ENCODE measurements at regions of chr4 and their contacts with region 1.

Region 1: GRCh38 chr4:74311696-74312313 is 3.5 kb downstream of the EPGN start:
- DNase-seq: peak; percentile 39 to 61
- H3K4me3 ChIP-seq: no peak overlapping the region
- H3K4me3 Mint-ChIP-seq: no peak overlapping the region
- H3K27ac Mint-ChIP-seq: no peak overlapping the region
- H3K4me1 ChIP-seq: no peaks in the 10 kb centered on the region
- H3K4me1 Mint-ChIP-seq: no peaks in the 10 kb centered on the region
- H3K27me3 ChIP-seq: no peaks in the 10 kb centered on the region
- H3K27me3 Mint-ChIP-seq: no peaks in the 10 kb centered on the region
- CTCF ChIP-seq: peak; percentile 58 to 60

Region 2: DNA sequence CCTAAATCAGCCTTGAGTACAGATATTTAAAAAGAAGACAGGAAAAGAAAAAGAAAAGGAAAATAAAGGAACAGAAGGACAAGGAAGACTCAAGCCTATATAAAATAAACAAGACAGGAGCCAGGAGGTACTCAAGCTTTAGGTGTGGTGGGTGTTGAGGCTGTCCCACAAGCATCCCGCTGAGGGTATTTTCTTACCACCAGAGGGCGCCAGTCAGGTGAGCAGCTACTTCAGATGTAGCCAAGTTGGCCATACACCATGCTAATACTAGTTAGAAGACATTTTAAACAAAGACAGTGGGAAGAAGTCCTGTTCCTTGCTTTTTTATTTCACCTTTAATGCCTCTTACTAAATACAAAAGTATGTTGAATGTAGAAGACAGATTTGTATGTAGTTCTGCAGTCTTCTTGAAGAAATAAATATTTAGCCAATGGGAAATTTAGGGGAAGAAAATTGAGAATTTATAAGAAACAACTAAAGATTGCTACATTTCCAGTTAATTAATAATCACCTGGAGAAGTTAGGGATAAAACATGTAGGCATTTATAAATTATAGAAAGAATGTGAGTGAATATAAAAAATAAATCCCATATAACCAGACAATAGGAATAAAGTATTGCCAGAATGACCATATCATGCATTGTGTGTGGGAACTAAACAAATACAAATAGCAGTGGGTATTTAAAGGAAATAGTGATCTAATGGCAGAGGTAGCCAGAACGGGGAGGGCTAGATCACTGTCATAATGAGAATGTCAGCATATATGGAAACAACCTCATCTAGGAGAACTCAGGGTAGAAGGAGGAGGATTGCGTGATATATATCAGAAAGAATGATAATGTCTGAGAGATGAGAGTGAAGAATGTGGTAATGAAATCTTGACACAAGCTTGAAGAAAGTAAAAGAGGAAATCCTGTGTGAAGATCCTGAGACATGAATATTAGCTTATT is 82.8 kb before region 1 on chr4:
- CTCF ChIA-PET with region 1: interaction called, 4 read pairs
- POLR2A ChIA-PET with region 1: no interaction called
- intact Hi-C with region 1: loop called (anchors 1 kb)
- DNase-seq: peak; percentile 77 to 83
- H3K4me3 ChIP-seq: no peak overlapping the region
- H3K4me3 Mint-ChIP-seq: no peak overlapping the region
- H3K27ac Mint-ChIP-seq: no peak overlapping the region
- H3K4me1 ChIP-seq: no peaks in the 10 kb centered on the region
- H3K4me1 Mint-ChIP-seq: no peaks in the 10 kb centered on the region
- H3K27me3 ChIP-seq: no peaks in the 10 kb centered on the region
- H3K27me3 Mint-ChIP-seq: no peaks in the 10 kb centered on the region
- CTCF ChIP-seq: peak; percentile 61 to 73

Region 3: GRCh38 chr4:75385106-75385505 is 1073.3 kb after region 1 on chr4:
- CTCF ChIA-PET with region 1: no interaction called
- POLR2A ChIA-PET with region 1: no interaction called
- intact Hi-C with region 1: no loop called
- DNase-seq: no peak
- H3K4me3 ChIP-seq: no peak overlapping the region
- H3K4me3 Mint-ChIP-seq: no peak overlapping the region
- H3K27ac Mint-ChIP-seq: no peak overlapping the region
- H3K4me1 ChIP-seq: no peaks in the 10 kb centered on the region
- H3K4me1 Mint-ChIP-seq: no peaks in the 10 kb centered on the region
- H3K27me3 ChIP-seq: no peaks in the 10 kb centered on the region
- H3K27me3 Mint-ChIP-seq: no peaks in the 10 kb centered on the region
- CTCF ChIP-seq: no peak